IMR-90 (cell line): ENCODE measurements at regions of chr18 and their contacts with region 1.

Region 1: DNA sequence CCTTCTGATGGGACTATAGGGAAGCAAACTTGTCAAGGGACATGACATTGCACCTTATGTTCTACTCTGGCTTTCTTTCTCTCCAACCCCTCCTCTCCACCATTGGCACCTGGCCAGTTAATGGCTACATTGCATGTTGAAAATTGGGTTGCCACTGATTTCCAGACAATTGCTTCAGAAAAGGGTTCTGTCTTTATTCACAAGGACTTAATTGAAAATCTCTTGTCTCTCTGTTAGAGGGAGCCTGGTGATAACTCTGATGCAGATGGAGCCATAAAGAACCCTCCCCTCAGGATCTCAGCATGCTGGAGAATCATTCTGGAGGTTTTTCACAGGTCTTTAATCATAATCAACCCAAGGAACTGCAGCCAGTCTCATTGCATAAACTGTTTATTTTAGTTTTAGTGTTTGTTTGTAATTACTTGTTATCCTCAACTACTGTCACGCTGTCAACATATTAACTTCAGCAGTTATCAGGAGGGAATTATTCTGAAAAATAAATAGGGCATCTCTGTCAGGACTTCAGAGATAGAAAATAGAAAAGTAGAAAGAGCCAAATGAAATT is 316.8 kb downstream of the RIT2 start:
- DNase-seq: no peak
- ATAC-seq: no peak
- H3K4me3 ChIP-seq: no peak overlapping the region
- H3K27ac ChIP-seq: no peak overlapping the region
- H3K4me1 ChIP-seq: no peaks in the 10 kb centered on the region
- H3K27me3 ChIP-seq: no peaks in the 10 kb centered on the region
- CTCF ChIP-seq: no peak
- POLR2A ChIP-seq: no peak
- RAD21 ChIP-seq: no peak

Region 2: DNA sequence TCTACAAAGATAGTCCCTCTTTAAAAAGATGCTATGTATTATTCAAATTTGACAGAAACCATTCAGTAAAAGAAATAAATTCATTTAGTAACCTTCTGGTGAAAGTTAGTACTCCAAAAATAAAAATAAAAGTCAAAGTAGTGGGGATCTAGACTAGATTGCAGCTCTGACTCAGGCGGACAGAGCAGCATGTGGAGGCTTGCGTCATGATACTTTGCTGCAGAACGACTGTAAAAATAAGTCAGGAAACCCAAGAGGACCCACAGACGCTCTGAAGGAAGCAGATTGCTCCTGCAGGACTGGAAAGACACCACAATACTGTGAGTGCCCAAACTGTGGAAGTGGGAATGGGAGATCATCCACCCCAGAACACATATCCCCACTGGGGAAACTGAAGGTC is 14.9 kb after region 1 on chr18:
- CTCF ChIA-PET with region 1: no interaction called
- POLR2A ChIA-PET with region 1: no interaction called
- dilution Hi-C with region 1: no loop called
- in situ Hi-C with region 1: no loop called
- intact Hi-C with region 1: no loop called
- DNase-seq: no peak
- ATAC-seq: no peak
- H3K4me3 ChIP-seq: no peak overlapping the region
- H3K27ac ChIP-seq: no peak overlapping the region
- H3K4me1 ChIP-seq: no peaks in the 10 kb centered on the region
- H3K27me3 ChIP-seq: no peaks in the 10 kb centered on the region
- CTCF ChIP-seq: no peak
- POLR2A ChIP-seq: no peak
- RAD21 ChIP-seq: no peak

Region 3: DNA sequence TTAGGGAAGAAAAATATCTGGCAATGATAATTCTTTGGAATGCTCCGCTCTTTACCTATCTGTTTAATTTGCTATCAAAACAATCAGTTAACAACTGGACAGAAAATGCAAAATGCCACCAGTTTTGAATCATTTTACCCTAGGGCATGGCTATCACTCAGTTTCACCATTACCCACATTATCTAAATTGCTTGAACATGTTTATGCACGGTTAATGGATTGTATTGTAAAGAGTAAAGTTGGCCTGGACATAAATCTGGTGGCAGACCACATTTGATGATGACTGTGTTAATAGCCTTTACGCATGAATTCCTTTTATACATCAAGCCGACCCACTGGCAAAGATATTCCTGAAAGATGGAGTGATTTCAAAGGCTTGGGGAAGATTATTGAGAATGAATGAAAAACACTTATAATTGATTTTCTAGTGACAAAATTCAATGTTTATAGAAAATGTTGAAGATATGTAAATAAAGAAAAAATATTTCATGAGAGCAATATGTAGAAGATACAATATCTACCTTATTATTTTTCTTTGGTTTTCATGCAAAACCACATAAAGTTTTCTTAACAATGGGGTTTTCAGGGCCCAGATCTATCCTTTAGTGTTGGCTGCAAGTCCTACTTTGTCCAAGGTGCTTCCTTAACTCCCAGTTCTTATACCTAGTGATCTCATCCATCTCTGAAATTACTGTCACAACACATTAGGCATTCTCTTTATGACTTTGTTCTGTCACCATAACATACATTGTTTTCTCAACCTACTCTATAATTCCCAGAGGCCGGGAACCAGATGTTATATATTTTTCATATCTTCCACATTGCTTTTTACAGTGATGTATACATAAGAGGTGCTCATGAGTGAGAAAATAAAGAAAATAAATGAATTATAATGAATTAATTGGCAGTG is 51.7 kb after region 1 on chr18:
- CTCF ChIA-PET with region 1: no interaction called
- POLR2A ChIA-PET with region 1: no interaction called
- dilution Hi-C with region 1: no loop called
- in situ Hi-C with region 1: loop called (anchors 10 kb)
- intact Hi-C with region 1: no loop called
- DNase-seq: no peak
- ATAC-seq: no peak
- H3K4me3 ChIP-seq: no peak overlapping the region
- H3K27ac ChIP-seq: no peak overlapping the region
- H3K4me1 ChIP-seq: no peaks in the 10 kb centered on the region
- H3K27me3 ChIP-seq: no peaks in the 10 kb centered on the region
- CTCF ChIP-seq: no peak
- POLR2A ChIP-seq: no peak
- RAD21 ChIP-seq: no peak